GM12878 (cell line): ENCODE measurements at regions of chr11 and their contacts with region 1.

Region 1: DNA sequence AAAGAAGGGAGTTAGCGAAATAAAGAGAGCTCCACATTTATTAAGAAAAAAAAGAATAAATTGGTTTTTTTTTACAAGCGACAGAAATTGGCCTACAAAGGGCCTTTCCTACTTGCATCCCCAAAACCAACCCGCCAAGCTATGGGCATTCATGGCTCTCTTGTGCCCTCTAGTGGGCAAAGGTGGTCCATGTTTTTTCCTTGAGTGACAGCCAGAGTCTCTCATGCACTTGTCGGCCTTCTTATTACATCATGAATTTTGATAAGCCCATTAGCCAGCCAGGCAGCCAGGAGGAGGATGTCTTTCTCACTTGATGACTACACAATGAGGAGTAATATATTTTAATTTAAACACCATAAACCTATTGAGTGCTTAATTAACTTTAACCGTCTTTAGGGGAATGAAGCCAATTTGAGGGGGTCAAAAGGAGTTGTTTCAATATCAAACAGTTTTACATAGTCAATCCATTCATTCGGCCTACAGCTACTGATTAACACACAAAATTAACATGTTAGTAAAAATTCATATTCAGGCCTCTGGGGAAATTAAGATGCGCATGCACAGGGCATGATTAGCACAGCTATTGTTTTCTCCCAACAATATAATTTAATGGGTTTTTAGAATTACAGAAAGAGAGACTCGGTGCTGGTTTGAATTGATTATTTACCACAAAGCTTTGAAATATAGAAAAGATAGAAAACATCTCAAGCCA is 85.5 kb downstream of the RCN1 start:
- DNase-seq: peak; percentile 64
- ATAC-seq: peak; percentile 88
- H3K4me3 ChIP-seq: no peak overlapping the region
- H3K27ac ChIP-seq: no peak overlapping the region
- H3K4me1 ChIP-seq: no peaks in the 10 kb centered on the region; the same call in 1 of the 2 replicates
- H3K27me3 ChIP-seq: no peaks in the 10 kb centered on the region
- CTCF ChIP-seq: peak; percentile 74 to 96 (median 77)
- EP300 ChIP-seq: no peak
- POLR2A ChIP-seq: no peak
- RAD21 ChIP-seq: peak; percentile 99

Region 2: GRCh38 chr11:31240338-31240904 is 936.0 kb before region 1 on chr11:
- CTCF ChIA-PET with region 1: interaction called, 15 read pairs
- POLR2A ChIA-PET with region 1: no interaction called
- RAD21 ChIA-PET with region 1: interaction called, 8 read pairs
- SMC1A ChIA-PET with region 1: interaction called, 7 read pairs
- in situ Hi-C with region 1: loop called (anchors 10 kb)
- intact Hi-C with region 1: loop called (anchors 5 kb)
- DNase-seq: no peak
- ATAC-seq: peak; percentile 68
- H3K4me3 ChIP-seq: no peak overlapping the region
- H3K27ac ChIP-seq: no peak overlapping the region
- H3K4me1 ChIP-seq: no peaks in the 10 kb centered on the region
- H3K27me3 ChIP-seq: no peaks in the 10 kb centered on the region
- CTCF ChIP-seq: peak; percentile 50 to 54 (median 54)
- EP300 ChIP-seq: no peak
- POLR2A ChIP-seq: no peak
- RAD21 ChIP-seq: peak; percentile 61

Region 3: GRCh38 chr11:31487848-31488247 is 688.5 kb before region 1 on chr11:
- CTCF ChIA-PET with region 1: interaction called, 4 read pairs
- POLR2A ChIA-PET with region 1: no interaction called
- RAD21 ChIA-PET with region 1: no interaction called
- SMC1A ChIA-PET with region 1: no interaction called
- in situ Hi-C with region 1: no loop called
- intact Hi-C with region 1: loop called (anchors 5 kb)
- DNase-seq: no peak
- ATAC-seq: peak; percentile 74
- H3K4me3 ChIP-seq: no peak overlapping the region
- H3K27ac ChIP-seq: no peak overlapping the region
- H3K4me1 ChIP-seq: no peaks in the 10 kb centered on the region
- H3K27me3 ChIP-seq: no peaks in the 10 kb centered on the region
- CTCF ChIP-seq: peak; percentile 2 to 47 (median 21); a peak in 2 of 6 replicates
- EP300 ChIP-seq: no peak
- POLR2A ChIP-seq: no peak
- RAD21 ChIP-seq: peak; percentile 57

Region 4: GRCh38 chr11:32006799-32007388 is 169.5 kb before region 1 on chr11:
- CTCF ChIA-PET with region 1: interaction called, 16 read pairs
- POLR2A ChIA-PET with region 1: no interaction called
- RAD21 ChIA-PET with region 1: interaction called, 6 read pairs
- SMC1A ChIA-PET with region 1: interaction called, 10 read pairs
- in situ Hi-C with region 1: no loop called
- intact Hi-C with region 1: no loop called
- DNase-seq: peak; percentile 11
- ATAC-seq: peak; percentile 87
- H3K4me3 ChIP-seq: no peak overlapping the region
- H3K27ac ChIP-seq: no peak overlapping the region
- H3K4me1 ChIP-seq: no peaks in the 10 kb centered on the region
- H3K27me3 ChIP-seq: no peaks in the 10 kb centered on the region
- CTCF ChIP-seq: peak; percentile 68 to 75 (median 72); a peak in 5 of 6 replicates
- EP300 ChIP-seq: no peak
- POLR2A ChIP-seq: no peak
- RAD21 ChIP-seq: peak; percentile 68

Region 5: DNA sequence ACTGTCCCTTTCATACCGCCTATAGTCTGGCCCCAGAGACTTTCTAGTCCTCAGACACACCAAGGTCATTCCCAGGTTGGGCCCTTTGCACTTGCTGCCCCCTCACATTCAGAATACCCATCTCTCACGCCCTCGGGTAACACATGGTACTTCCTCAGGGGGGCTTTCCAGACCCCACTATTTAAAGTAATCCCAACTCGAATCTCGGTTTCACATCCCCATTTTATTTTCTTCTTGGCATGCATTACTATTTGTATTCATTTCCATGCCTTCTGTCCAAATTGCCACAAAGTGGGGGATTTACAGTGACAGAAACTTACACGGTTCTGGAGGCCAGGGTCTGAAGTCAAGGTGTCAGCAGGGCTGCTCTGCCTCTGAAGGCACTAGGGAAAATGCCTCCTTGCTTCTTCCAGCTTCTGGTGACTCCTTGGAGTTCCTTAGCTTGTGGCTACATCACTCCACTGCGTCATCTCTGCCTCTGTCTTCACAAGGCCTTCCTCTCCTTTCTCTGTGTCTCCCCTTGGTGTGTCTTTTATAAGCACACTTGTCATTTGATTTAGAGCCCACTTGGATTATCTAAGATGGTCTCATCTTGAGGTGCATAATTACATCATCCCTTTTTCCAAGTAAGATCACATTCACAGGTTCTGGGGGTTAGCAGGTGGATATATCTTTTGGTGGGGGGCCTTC is 70.4 kb before region 1 on chr11:
- CTCF ChIA-PET with region 1: interaction called, 4 read pairs
- POLR2A ChIA-PET with region 1: no interaction called
- RAD21 ChIA-PET with region 1: interaction called, 5 read pairs
- SMC1A ChIA-PET with region 1: interaction called, 3 read pairs
- in situ Hi-C with region 1: no loop called
- intact Hi-C with region 1: loop called (anchors 1 kb)
- DNase-seq: peak; percentile 81
- ATAC-seq: peak; percentile 91
- H3K4me3 ChIP-seq: peak overlapping the region; percentile 33
- H3K27ac ChIP-seq: peak overlapping the region; percentile 82
- H3K4me1 ChIP-seq: peaks cover 22% of the 10 kb centered on the region
- H3K27me3 ChIP-seq: no peaks in the 10 kb centered on the region
- CTCF ChIP-seq: no peak
- EP300 ChIP-seq: peak; percentile 82
- POLR2A ChIP-seq: no peak; the same call in 1 of the 2 replicates
- RAD21 ChIP-seq: no peak

Region 6: DNA sequence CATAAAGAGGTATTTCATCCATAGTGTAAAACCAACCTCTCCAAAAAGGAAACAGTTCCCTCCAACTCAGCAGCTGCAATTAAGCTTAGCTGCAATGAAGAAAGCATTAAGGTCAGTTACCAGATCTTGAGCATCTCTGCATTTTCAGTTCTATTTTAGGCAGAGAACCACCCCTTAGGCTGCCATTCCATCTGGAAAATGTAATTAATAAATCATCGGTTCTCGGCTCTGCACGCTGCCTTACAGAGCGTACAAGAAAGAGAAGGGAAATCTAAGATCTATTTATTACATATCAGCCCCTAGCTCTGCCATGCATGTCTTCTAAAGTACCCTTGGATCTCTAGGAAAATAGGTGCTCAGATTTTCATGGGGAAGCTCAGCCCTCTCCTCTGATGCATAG is 14.0 kb before region 1 on chr11:
- CTCF ChIA-PET with region 1: interaction called, 27 read pairs
- POLR2A ChIA-PET with region 1: no interaction called
- RAD21 ChIA-PET with region 1: interaction called, 10 read pairs
- SMC1A ChIA-PET with region 1: interaction called, 10 read pairs
- in situ Hi-C with region 1: no loop called
- intact Hi-C with region 1: no loop called
- DNase-seq: no peak
- ATAC-seq: no peak
- H3K4me3 ChIP-seq: no peak overlapping the region
- H3K27ac ChIP-seq: no peak overlapping the region
- H3K4me1 ChIP-seq: no peaks in the 10 kb centered on the region
- H3K27me3 ChIP-seq: no peaks in the 10 kb centered on the region
- CTCF ChIP-seq: no peak
- EP300 ChIP-seq: no peak
- POLR2A ChIP-seq: no peak
- RAD21 ChIP-seq: no peak

Region 7: DNA sequence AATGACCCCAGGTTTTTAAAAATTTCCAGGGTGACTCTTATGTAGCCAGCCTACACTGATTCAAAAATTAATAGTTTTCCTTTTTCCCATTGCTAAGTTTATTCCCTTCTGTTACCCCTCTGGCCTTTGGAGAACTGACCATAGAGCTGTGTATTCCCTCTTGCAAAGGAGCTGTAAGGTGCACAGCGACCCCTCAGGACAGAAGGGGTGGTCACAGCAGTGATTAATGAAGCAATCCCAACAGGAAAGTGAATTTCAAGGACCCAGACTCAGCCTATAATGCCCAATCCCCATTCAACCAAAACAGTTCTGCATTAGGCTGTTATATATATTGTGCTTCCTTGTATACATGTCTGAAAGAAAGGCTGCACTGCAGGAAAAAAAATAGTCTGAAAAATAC is 111.9 kb after region 1 on chr11:
- CTCF ChIA-PET with region 1: no interaction called
- POLR2A ChIA-PET with region 1: no interaction called
- RAD21 ChIA-PET with region 1: no interaction called
- SMC1A ChIA-PET with region 1: no interaction called
- in situ Hi-C with region 1: no loop called
- intact Hi-C with region 1: no loop called
- DNase-seq: no peak
- ATAC-seq: no peak
- H3K4me3 ChIP-seq: no peak overlapping the region
- H3K27ac ChIP-seq: no peak overlapping the region
- H3K4me1 ChIP-seq: no peaks in the 10 kb centered on the region
- H3K27me3 ChIP-seq: no peaks in the 10 kb centered on the region; a peak in 2 of 4 replicates
- CTCF ChIP-seq: no peak
- EP300 ChIP-seq: no peak
- POLR2A ChIP-seq: no peak
- RAD21 ChIP-seq: no peak

Region 8: DNA sequence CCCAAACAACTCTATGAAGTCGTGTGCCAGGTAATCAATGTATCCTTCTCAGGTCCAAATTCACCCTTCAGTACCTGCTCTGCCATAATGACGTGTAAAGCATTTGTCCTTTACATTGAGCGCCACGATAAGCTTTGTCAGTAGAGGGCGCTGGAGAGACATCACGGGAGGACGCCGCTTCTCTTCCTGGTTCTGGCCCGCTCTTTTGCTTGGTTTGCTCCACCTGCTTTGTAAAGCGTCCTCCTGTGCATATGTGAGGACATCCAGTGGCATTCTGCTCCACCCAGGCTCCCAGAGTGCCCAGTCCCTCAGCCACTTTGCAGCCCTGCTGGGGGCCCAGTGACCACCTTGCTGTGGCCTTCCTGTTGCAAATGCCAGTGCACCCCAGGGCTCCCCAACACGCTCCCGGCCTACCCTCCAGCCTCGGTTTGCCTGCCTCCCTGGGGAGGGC is 197.9 kb after region 1 on chr11:
- CTCF ChIA-PET with region 1: no interaction called
- POLR2A ChIA-PET with region 1: no interaction called
- RAD21 ChIA-PET with region 1: no interaction called
- SMC1A ChIA-PET with region 1: no interaction called
- in situ Hi-C with region 1: no loop called
- intact Hi-C with region 1: no loop called
- DNase-seq: peak; percentile 25
- ATAC-seq: peak; percentile 96
- H3K4me3 ChIP-seq: no peak overlapping the region
- H3K27ac ChIP-seq: no peak overlapping the region
- H3K4me1 ChIP-seq: no peaks in the 10 kb centered on the region; the same call in 1 of the 2 replicates
- H3K27me3 ChIP-seq: no peaks in the 10 kb centered on the region
- CTCF ChIP-seq: peak; percentile 57 to 72 (median 65)
- EP300 ChIP-seq: no peak
- POLR2A ChIP-seq: no peak
- RAD21 ChIP-seq: peak; percentile 59

Region 9: GRCh38 chr11:32487270-32487669 is 310.9 kb after region 1 on chr11:
- CTCF ChIA-PET with region 1: no interaction called
- POLR2A ChIA-PET with region 1: no interaction called
- RAD21 ChIA-PET with region 1: no interaction called
- SMC1A ChIA-PET with region 1: no interaction called
- in situ Hi-C with region 1: no loop called
- intact Hi-C with region 1: no loop called
- DNase-seq: no peak
- ATAC-seq: peak; percentile 57
- H3K4me3 ChIP-seq: no peak overlapping the region
- H3K27ac ChIP-seq: no peak overlapping the region
- H3K4me1 ChIP-seq: no peaks in the 10 kb centered on the region
- H3K27me3 ChIP-seq: no peaks in the 10 kb centered on the region
- CTCF ChIP-seq: peak in 2 of 3 experiments; percentile 25 to 31; a peak in 2 of 6 replicates
- EP300 ChIP-seq: no peak
- POLR2A ChIP-seq: no peak
- RAD21 ChIP-seq: 0 out of 2 replicates have a peak, but pooled peaks have one; percentile 5